Left ventricle myocardium inferior (tissue), 1 donor: ENCODE measurements at regions of chr17 and their contacts with region 1.

Region 1: DNA sequence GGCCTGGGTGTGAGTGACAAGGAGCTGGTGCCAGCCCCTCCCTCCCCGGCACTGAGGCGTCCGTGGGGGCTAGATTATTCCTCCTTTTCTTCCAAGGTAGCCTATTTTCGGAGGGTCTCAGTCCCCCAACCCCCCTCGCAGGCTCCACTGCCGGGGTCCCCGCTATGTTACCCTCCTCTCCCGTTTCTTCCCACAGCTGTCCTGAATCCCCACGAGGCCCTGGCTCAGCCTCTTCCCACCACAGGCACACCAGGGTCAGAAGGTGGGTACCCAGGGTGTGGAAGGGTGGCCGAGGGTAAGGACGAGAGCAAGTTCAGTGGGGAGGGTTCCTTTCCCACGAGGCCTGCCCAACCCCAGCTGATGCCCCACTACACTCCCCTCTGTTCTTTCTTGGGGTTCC is 611 bp downstream of the RAMP2 start:
- DNase-seq: no peak
- H3K4me3 ChIP-seq: peak overlapping the region; percentile 81
- H3K27ac ChIP-seq: peak overlapping the region; percentile 94
- H3K4me1 ChIP-seq: peaks cover 38% of the 10 kb centered on the region
- H3K27me3 ChIP-seq: peaks cover 31% of the 10 kb centered on the region
- CTCF ChIP-seq: no peak

Region 2: DNA sequence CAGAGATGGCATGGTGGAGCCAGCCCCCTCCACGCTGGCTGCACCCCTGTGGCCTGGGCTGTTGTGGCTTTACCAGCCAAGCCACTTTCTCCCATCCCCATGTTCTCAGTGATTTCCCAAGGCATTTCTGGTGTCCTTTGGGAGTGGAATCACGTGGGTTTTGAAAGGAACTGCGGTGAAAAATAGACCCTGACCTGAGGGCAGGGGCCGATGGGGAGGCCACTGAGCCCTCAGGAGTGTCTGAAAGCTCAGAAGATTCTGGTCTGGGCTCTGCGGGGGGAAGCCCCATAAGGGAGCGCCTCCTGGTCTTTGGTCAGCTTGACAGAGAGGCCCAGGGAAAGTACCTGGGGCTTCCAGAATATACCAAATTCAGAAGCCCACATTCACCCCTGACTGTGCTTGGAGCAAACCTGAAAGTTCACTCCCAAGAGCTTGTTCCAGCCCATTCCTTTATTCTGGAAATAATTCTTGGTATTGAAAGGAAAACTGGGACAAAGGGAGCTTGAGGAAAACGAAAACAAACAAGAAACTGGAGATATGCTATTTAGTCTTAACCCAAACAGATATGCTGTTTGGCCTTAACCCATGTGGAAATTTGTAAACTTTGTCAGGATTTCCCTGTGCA is 248.9 kb before region 1 on chr17:
- intact Hi-C with region 1: no loop called
- DNase-seq: no peak
- H3K4me3 ChIP-seq: no peak overlapping the region
- H3K27ac ChIP-seq: peak overlapping the region; percentile 79
- H3K4me1 ChIP-seq: peaks cover 44% of the 10 kb centered on the region
- H3K27me3 ChIP-seq: no peaks in the 10 kb centered on the region
- CTCF ChIP-seq: no peak

Region 3: DNA sequence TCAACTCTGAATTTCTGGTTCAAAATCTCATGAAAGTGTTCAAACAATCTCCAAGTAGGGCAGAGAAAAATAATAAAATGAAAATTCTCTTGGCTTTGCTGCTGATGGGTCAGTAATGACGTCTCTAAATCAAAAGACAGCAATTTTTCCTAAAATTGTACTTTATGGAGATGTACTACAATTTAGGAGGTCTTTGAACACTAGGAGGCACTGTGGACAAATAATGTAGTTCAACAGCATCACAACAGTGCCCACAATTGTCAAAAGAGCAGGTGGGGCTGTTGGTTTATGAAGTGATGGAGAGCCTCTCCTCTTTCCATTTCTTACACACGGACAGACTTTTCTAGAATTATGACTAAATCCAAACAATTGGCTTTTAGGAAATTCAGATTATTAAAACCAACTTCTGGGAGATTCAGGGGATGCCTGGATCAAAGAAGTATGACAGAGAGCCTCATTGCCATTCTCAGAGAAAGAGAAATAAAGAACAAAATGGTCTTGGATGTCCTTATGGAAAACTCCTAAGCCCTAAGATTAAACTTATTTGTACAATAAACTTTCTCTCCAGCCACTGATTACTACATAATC is 40.5 kb before region 1 on chr17:
- intact Hi-C with region 1: loop called (anchors 2 kb)
- DNase-seq: no peak
- H3K4me3 ChIP-seq: no peak overlapping the region
- H3K27ac ChIP-seq: no peak overlapping the region
- H3K4me1 ChIP-seq: no peaks in the 10 kb centered on the region
- H3K27me3 ChIP-seq: no peaks in the 10 kb centered on the region
- CTCF ChIP-seq: peak; percentile 75